GM12878 (cell line): ENCODE measurements at regions of chr5 and their contacts with region 1.

Region 1: GRCh38 chr5:160082614-160083500 is 36.4 kb downstream of the PWWP2A start:
- DNase-seq: no peak
- ATAC-seq: no peak
- H3K4me3 ChIP-seq: no peak overlapping the region
- H3K27ac ChIP-seq: no peak overlapping the region
- H3K4me1 ChIP-seq: no peaks in the 10 kb centered on the region
- H3K27me3 ChIP-seq: no peaks in the 10 kb centered on the region
- CTCF ChIP-seq: no peak
- EP300 ChIP-seq: no peak
- POLR2A ChIP-seq: no peak
- RAD21 ChIP-seq: no peak

Region 2: GRCh38 chr5:160071516-160071915 is 11.3 kb before region 1 on chr5:
- CTCF ChIA-PET with region 1: interaction called, 18 read pairs
- POLR2A ChIA-PET with region 1: no interaction called
- RAD21 ChIA-PET with region 1: interaction called, 9 read pairs
- SMC1A ChIA-PET with region 1: interaction called, 21 read pairs
- in situ Hi-C with region 1: no loop called
- intact Hi-C with region 1: no loop called
- DNase-seq: no peak
- ATAC-seq: no peak
- H3K4me3 ChIP-seq: no peak overlapping the region
- H3K27ac ChIP-seq: no peak overlapping the region
- H3K4me1 ChIP-seq: no peaks in the 10 kb centered on the region
- H3K27me3 ChIP-seq: no peaks in the 10 kb centered on the region
- CTCF ChIP-seq: no peak
- EP300 ChIP-seq: no peak
- POLR2A ChIP-seq: no peak
- RAD21 ChIP-seq: no peak

Region 3: DNA sequence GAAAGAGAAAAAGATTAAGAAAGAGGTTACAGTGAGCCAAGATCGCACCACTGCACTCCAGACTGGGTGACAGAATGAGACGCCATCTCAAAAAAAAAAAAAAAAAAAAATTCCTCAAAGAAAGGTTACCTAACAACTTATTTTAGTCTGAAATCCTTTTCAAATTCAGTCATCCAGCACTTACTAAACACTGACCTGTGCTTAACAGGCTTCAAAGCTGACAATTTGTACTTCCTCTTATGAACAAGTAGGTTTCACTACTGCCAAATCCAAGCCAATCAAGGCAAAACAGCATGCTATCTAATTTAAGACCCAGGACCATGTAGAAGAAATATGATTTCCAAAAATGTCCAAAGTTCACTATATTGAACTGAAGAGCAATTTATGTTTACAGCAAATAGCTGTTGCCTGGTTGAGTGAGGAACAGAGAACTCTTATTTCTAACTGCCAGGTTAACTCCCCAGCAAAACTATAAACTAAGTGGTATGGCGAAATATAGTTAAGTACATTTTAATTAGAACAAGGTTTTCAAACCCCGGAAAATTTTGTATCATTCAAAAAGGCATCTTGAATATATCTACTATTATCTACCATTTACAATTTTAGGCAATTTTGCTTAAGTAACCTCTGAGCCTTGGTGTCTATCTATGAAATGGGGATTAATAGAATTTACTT is 23.0 kb after region 1 on chr5:
- CTCF ChIA-PET with region 1: interaction called, 19 read pairs
- POLR2A ChIA-PET with region 1: no interaction called
- RAD21 ChIA-PET with region 1: no interaction called
- SMC1A ChIA-PET with region 1: interaction called, 3 read pairs
- in situ Hi-C with region 1: no loop called
- intact Hi-C with region 1: no loop called
- DNase-seq: peak; percentile 61
- ATAC-seq: peak; percentile 89
- H3K4me3 ChIP-seq: no peak overlapping the region
- H3K27ac ChIP-seq: peak overlapping the region; percentile 56
- H3K4me1 ChIP-seq: peaks cover 17% of the 10 kb centered on the region
- H3K27me3 ChIP-seq: no peaks in the 10 kb centered on the region
- CTCF ChIP-seq: no peak
- EP300 ChIP-seq: no peak
- POLR2A ChIP-seq: no peak
- RAD21 ChIP-seq: no peak

Region 4: GRCh38 chr5:160159991-160160792 is 77.3 kb after region 1 on chr5:
- CTCF ChIA-PET with region 1: interaction called, 9 read pairs
- POLR2A ChIA-PET with region 1: no interaction called
- RAD21 ChIA-PET with region 1: interaction called, 4 read pairs
- SMC1A ChIA-PET with region 1: interaction called, 6 read pairs
- in situ Hi-C with region 1: no loop called
- intact Hi-C with region 1: loop called (anchors 1 kb)
- DNase-seq: peak; percentile 28
- ATAC-seq: peak; percentile 87
- H3K4me3 ChIP-seq: peak overlapping the region; percentile 32; the same call in 1 of the 2 replicates
- H3K27ac ChIP-seq: peak overlapping the region; percentile 66
- H3K4me1 ChIP-seq: peaks cover 16% of the 10 kb centered on the region
- H3K27me3 ChIP-seq: no peaks in the 10 kb centered on the region
- CTCF ChIP-seq: no peak
- EP300 ChIP-seq: no peak; a peak in 1 of 4 replicates
- POLR2A ChIP-seq: no peak
- RAD21 ChIP-seq: no peak

Region 5: DNA sequence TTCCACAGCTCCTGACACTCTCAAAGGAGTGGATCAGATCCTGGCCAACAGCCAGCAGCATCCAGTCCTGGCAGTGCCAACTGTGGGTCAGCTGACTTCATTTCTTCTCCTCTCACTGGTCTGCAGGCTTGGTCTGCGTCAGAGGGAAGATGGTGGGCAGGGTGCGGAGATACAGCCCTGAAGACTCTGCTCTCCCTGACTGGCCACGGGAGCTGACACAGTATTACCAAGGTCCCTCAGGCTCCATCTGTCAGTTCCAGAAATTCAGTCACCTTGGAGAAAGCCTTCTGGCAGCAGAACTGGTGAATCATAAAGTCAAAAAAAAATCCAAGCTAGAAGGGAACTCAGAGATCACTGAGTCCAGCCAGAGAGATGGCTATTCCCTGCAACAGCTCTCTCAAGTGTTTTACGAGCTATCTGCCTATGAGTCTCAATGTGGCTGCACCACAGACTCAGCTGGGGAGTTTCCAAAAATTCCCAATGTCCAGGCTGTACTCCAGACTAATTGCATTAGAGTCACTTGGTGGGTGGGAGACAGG is 259.6 kb after region 1 on chr5:
- CTCF ChIA-PET with region 1: interaction called, 54 read pairs
- POLR2A ChIA-PET with region 1: no interaction called
- RAD21 ChIA-PET with region 1: interaction called, 37 read pairs
- SMC1A ChIA-PET with region 1: interaction called, 41 read pairs
- in situ Hi-C with region 1: loop called (anchors 10 kb)
- intact Hi-C with region 1: loop called (anchors 1 kb)
- DNase-seq: no peak
- ATAC-seq: no peak
- H3K4me3 ChIP-seq: no peak overlapping the region
- H3K27ac ChIP-seq: no peak overlapping the region
- H3K4me1 ChIP-seq: no peaks in the 10 kb centered on the region
- H3K27me3 ChIP-seq: no peaks in the 10 kb centered on the region
- CTCF ChIP-seq: no peak
- EP300 ChIP-seq: no peak
- POLR2A ChIP-seq: no peak
- RAD21 ChIP-seq: no peak